OCI-LY7 (cell line): ENCODE measurements at regions of chr2 and their contacts with region 1.

Region 1: DNA sequence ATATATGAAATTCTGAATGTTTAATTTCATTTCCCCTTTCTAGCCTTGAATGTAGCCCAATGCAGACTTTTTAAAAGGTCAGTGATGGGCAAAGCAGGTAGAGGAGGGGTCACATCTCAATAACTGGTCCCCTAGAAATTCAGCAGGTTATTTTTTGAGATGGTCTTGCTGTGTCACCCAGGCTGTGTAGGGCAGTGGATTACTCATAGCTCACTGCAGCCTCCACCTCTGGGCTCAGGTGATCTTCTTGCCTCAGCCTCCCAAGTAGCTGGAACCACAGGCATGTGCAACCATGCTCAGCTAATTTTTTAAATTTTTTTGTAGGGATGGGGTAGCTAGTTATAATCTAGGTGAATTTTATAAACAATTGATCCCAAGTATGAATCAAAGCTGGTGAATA is 8.8 kb downstream of the IAH1 start:
- DNase-seq: no peak
- H3K4me3 ChIP-seq: no peak overlapping the region
- H3K27ac ChIP-seq: peak overlapping the region; percentile 6
- H3K4me1 ChIP-seq: peaks cover 42% of the 10 kb centered on the region
- CTCF ChIP-seq: no peak

Region 2: GRCh38 chr2:9493478-9493877 is 10.4 kb after region 1 on chr2:
- CTCF ChIA-PET with region 1: no interaction called
- POLR2A ChIA-PET with region 1: interaction called, 10 read pairs
- intact Hi-C with region 1: no loop called
- DNase-seq: no peak
- H3K4me3 ChIP-seq: no peak overlapping the region
- H3K27ac ChIP-seq: no peak overlapping the region
- H3K4me1 ChIP-seq: no peaks in the 10 kb centered on the region
- CTCF ChIP-seq: no peak